IMR-90 (cell line): ENCODE measurements at regions of chr3 and their contacts with region 1.

Region 1: DNA sequence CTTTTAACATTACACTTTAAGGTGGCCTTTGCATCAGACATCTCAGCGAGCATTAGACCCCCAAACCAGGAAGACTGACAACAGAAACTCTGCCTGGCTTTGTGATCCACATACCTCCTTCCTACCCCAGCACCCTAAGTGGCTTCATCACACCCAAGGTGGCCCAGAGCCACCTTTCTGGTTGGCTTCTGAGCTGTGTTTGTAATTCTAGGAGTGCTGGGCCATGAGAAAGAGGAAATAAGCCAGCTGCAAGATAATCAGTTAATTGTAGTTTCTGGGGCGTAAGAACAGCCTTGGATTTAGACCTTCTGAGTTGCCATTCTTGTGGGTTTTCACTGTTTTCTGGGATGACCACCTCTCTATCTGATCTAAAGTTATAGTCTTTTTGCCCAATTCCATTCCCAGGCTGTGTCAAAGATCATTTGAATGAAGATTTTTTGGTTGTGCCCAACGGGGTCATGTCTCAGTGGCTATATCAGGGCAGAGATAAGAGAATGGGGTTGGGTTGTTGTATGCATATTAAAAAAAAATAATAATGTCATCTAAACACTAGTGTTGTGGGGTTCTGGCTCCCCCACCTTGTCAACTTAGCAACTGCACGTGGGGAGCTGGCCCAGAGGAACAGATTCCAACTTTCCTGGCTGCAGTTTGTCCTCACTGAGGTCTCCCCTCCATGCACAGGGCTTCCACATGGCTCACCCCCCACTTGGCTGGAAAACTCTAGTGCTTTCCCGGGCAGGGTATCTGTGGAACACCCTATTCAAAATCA is 234.8 kb upstream of the WNT5A start:
- DNase-seq: peak; percentile 51
- ATAC-seq: peak; percentile 76
- H3K4me3 ChIP-seq: no peak overlapping the region
- H3K27ac ChIP-seq: no peak overlapping the region
- H3K4me1 ChIP-seq: peaks cover 6% of the 10 kb centered on the region
- H3K27me3 ChIP-seq: peaks cover 6% of the 10 kb centered on the region; the same call in 1 of the 2 replicates
- CTCF ChIP-seq: peak; percentile 72
- POLR2A ChIP-seq: no peak
- RAD21 ChIP-seq: peak; percentile 83

Region 2: GRCh38 chr3:54859184-54859583 is 862.7 kb before region 1 on chr3:
- CTCF ChIA-PET with region 1: no interaction called
- POLR2A ChIA-PET with region 1: no interaction called
- dilution Hi-C with region 1: no loop called
- in situ Hi-C with region 1: loop called (anchors 10 kb)
- intact Hi-C with region 1: loop called (anchors 2 kb)
- DNase-seq: peak; percentile 68
- ATAC-seq: peak; percentile 50; the same call in 1 of the 2 replicates
- H3K4me3 ChIP-seq: no peak overlapping the region
- H3K27ac ChIP-seq: no peak overlapping the region
- H3K4me1 ChIP-seq: peaks cover 6% of the 10 kb centered on the region
- H3K27me3 ChIP-seq: no peaks in the 10 kb centered on the region; the same call in 1 of the 2 replicates
- CTCF ChIP-seq: no peak
- POLR2A ChIP-seq: no peak
- RAD21 ChIP-seq: no peak

Region 3: DNA sequence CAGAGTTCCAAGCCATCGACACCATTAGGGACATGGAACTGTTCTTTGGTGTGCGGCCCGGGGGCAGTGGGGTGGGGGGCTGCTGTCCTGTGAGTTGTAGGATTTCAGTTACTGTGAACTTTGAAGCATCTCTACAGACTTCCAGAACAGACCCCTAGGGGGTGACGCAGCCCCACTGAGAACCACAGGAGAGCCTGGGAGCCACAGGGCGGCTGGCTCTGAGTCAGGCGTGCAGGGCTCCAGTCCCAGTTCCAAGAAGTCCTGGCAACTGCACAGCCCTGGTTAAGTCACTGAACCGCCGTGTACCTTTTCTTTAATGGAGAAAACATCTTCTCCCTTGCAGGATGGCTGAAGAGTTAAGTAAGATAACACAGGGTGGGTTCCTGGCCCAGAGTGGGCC is 770.5 kb before region 1 on chr3:
- CTCF ChIA-PET with region 1: no interaction called
- POLR2A ChIA-PET with region 1: no interaction called
- dilution Hi-C with region 1: no loop called
- in situ Hi-C with region 1: loop called (anchors 10 kb)
- intact Hi-C with region 1: loop called (anchors 1 kb)
- DNase-seq: peak; percentile 93
- ATAC-seq: peak; percentile 89
- H3K4me3 ChIP-seq: no peak overlapping the region
- H3K27ac ChIP-seq: peak overlapping the region; percentile 29
- H3K4me1 ChIP-seq: peaks cover 18% of the 10 kb centered on the region
- H3K27me3 ChIP-seq: no peaks in the 10 kb centered on the region
- CTCF ChIP-seq: peak; percentile 92
- POLR2A ChIP-seq: peak; percentile 53; the same call in 1 of the 2 replicates
- RAD21 ChIP-seq: peak; percentile 99

Region 4: DNA sequence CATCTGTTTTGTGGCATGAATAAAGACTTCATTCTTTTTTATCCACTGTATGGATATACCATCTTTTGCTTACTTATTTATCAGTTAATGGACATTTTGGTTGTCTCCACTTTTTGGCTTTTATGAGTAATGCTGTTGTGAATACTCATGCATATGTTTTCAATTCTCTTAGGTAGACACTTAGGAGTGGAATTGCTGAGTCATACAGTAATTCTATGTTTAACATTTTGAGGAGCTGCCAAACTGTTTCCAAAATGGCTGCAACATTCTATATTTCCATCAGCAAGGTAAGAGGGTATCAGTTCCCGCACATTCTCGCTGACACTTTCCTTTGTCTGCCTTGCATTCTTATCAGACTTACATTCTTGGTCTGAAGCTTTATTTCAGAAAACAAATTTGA is 425.9 kb before region 1 on chr3:
- CTCF ChIA-PET with region 1: no interaction called
- POLR2A ChIA-PET with region 1: no interaction called
- dilution Hi-C with region 1: no loop called
- in situ Hi-C with region 1: no loop called
- intact Hi-C with region 1: no loop called
- DNase-seq: peak; percentile 80
- ATAC-seq: peak; percentile 35; the same call in 1 of the 2 replicates
- H3K4me3 ChIP-seq: no peak overlapping the region
- H3K27ac ChIP-seq: 0 out of 2 replicates have a peak overlapping the region, but pooled peaks have one; percentile 29
- H3K4me1 ChIP-seq: peaks cover 6% of the 10 kb centered on the region
- H3K27me3 ChIP-seq: no peaks in the 10 kb centered on the region
- CTCF ChIP-seq: no peak
- POLR2A ChIP-seq: no peak
- RAD21 ChIP-seq: no peak

Region 5: DNA sequence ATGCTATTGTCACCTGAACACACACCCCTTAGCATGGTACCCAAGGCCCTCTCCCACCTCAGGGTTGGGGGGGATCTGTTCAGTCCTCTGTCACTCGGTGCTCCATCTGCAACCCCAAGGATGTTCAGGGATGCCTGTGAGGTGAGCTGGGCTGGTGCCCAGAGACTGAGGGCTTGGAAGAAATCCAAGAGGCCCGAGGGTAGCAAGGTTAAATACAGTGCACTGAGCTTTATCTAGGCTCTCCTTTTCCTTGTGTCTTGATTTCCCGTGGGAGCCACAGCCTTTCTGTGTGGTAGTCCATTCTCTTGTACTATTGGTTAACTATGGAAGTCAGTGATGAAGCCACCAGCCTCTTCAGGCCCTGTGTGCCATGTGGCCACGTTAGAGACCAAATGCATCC is 216.1 kb before region 1 on chr3:
- CTCF ChIA-PET with region 1: interaction called, 3 read pairs
- POLR2A ChIA-PET with region 1: no interaction called
- dilution Hi-C with region 1: no loop called
- in situ Hi-C with region 1: no loop called
- intact Hi-C with region 1: loop called (anchors 5 kb)
- DNase-seq: no peak
- ATAC-seq: no peak
- H3K4me3 ChIP-seq: no peak overlapping the region
- H3K27ac ChIP-seq: no peak overlapping the region
- H3K4me1 ChIP-seq: peaks cover 2% of the 10 kb centered on the region; the same call in 1 of the 2 replicates
- H3K27me3 ChIP-seq: no peaks in the 10 kb centered on the region
- CTCF ChIP-seq: no peak
- POLR2A ChIP-seq: no peak
- RAD21 ChIP-seq: no peak

Region 6: DNA sequence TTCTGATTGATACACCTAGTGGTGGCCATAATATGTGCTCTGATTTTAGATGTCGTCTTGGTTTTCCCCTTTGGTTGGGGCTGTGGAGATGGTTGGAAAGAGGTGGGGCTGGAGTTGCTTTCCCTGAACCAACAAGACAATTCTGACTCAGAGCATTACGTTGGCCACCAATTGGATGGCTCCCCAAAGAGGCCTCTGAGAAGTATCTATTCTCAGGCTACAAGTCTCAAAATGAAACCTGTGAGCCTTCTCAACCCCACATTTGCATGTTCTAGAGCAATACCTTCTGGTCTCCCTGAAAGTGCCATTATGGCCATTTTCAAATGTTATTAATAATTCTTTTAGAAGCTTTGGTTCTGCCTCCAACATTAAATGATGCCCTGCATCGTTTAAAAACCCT is 46.4 kb before region 1 on chr3:
- CTCF ChIA-PET with region 1: no interaction called
- POLR2A ChIA-PET with region 1: no interaction called
- dilution Hi-C with region 1: no loop called
- in situ Hi-C with region 1: no loop called
- intact Hi-C with region 1: no loop called
- DNase-seq: no peak
- ATAC-seq: no peak
- H3K4me3 ChIP-seq: no peak overlapping the region
- H3K27ac ChIP-seq: no peak overlapping the region
- H3K4me1 ChIP-seq: no peaks in the 10 kb centered on the region
- H3K27me3 ChIP-seq: no peaks in the 10 kb centered on the region
- CTCF ChIP-seq: no peak
- POLR2A ChIP-seq: no peak
- RAD21 ChIP-seq: no peak

Region 7: GRCh38 chr3:55735976-55736375 is 14.1 kb after region 1 on chr3:
- CTCF ChIA-PET with region 1: interaction called, 3 read pairs
- POLR2A ChIA-PET with region 1: no interaction called
- dilution Hi-C with region 1: no loop called
- in situ Hi-C with region 1: no loop called
- intact Hi-C with region 1: loop called (anchors 2 kb)
- DNase-seq: peak; percentile 11
- ATAC-seq: no peak; the same call in 1 of the 2 replicates
- H3K4me3 ChIP-seq: no peak overlapping the region
- H3K27ac ChIP-seq: no peak overlapping the region
- H3K4me1 ChIP-seq: no peaks in the 10 kb centered on the region; the same call in 1 of the 2 replicates
- H3K27me3 ChIP-seq: no peaks in the 10 kb centered on the region; the same call in none of the 2 replicates
- CTCF ChIP-seq: no peak
- POLR2A ChIP-seq: no peak
- RAD21 ChIP-seq: no peak

Region 8: GRCh38 chr3:55780913-55781312 is 59.0 kb after region 1 on chr3:
- CTCF ChIA-PET with region 1: no interaction called
- POLR2A ChIA-PET with region 1: no interaction called
- dilution Hi-C with region 1: no loop called
- in situ Hi-C with region 1: no loop called
- intact Hi-C with region 1: no loop called
- DNase-seq: no peak
- ATAC-seq: no peak
- H3K4me3 ChIP-seq: no peak overlapping the region
- H3K27ac ChIP-seq: no peak overlapping the region
- H3K4me1 ChIP-seq: no peaks in the 10 kb centered on the region
- H3K27me3 ChIP-seq: peaks cover 10% of the 10 kb centered on the region
- CTCF ChIP-seq: no peak
- POLR2A ChIP-seq: no peak
- RAD21 ChIP-seq: no peak

Region 9: GRCh38 chr3:56251343-56251945 is 529.5 kb after region 1 on chr3:
- CTCF ChIA-PET with region 1: no interaction called
- POLR2A ChIA-PET with region 1: no interaction called
- dilution Hi-C with region 1: no loop called
- in situ Hi-C with region 1: no loop called
- intact Hi-C with region 1: loop called (anchors 2 kb)
- DNase-seq: peak; percentile 51
- ATAC-seq: peak; percentile 79
- H3K4me3 ChIP-seq: no peak overlapping the region
- H3K27ac ChIP-seq: no peak overlapping the region
- H3K4me1 ChIP-seq: no peaks in the 10 kb centered on the region
- H3K27me3 ChIP-seq: peaks cover 2% of the 10 kb centered on the region; the same call in 1 of the 2 replicates
- CTCF ChIP-seq: peak; percentile 79
- POLR2A ChIP-seq: no peak
- RAD21 ChIP-seq: peak; percentile 79